Activated naive CD4-positive, alpha-beta T cell treated with anti-CD3 and anti-CD28 coated beads for 36 hours (primary cell): ENCODE measurements at regions of chr9 and their contacts with region 1.

Region 1: GRCh38 chr9:116589392-116590354 is 97.4 kb upstream of the TRIM32 start:
- DNase-seq: peak; percentile 43
- H3K4me3 Mint-ChIP-seq: no peak overlapping the region
- H3K27ac Mint-ChIP-seq: no peak overlapping the region
- H3K4me1 Mint-ChIP-seq: no peaks in the 10 kb centered on the region
- H3K27me3 Mint-ChIP-seq: no peaks in the 10 kb centered on the region

Region 2: GRCh38 chr9:116149844-116150243 is 439.8 kb before region 1 on chr9:
- CTCF ChIA-PET with region 1: no interaction called
- intact Hi-C with region 1: no loop called
- DNase-seq: no peak
- H3K4me3 Mint-ChIP-seq: no peak overlapping the region
- H3K27ac Mint-ChIP-seq: no peak overlapping the region
- H3K4me1 Mint-ChIP-seq: peaks cover 5% of the 10 kb centered on the region
- H3K27me3 Mint-ChIP-seq: peaks cover 50% of the 10 kb centered on the region

Region 3: DNA sequence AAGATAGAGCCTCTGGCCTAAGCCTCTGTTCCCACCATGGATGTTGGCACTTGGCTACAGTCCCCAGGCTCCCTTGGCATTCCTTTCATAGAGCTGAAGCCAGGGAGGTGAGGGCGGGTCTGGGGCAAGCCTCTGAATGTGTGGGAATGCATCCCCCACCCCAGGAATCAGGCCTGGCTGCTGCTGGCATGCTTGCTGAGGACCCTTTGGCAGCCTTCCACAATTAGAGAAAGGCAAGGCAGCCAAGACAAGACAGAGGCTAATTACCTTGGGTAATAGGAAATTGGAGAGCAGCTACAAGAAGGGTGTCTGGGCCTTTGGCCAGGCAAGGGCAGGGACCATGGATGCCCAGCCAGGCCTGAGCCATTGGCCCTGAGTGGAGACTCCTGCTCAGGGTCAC is 106.9 kb before region 1 on chr9:
- CTCF ChIA-PET with region 1: no interaction called
- intact Hi-C with region 1: no loop called
- DNase-seq: no peak
- H3K4me3 Mint-ChIP-seq: no peak overlapping the region
- H3K27ac Mint-ChIP-seq: no peak overlapping the region
- H3K4me1 Mint-ChIP-seq: no peaks in the 10 kb centered on the region
- H3K27me3 Mint-ChIP-seq: no peaks in the 10 kb centered on the region

Region 4: DNA sequence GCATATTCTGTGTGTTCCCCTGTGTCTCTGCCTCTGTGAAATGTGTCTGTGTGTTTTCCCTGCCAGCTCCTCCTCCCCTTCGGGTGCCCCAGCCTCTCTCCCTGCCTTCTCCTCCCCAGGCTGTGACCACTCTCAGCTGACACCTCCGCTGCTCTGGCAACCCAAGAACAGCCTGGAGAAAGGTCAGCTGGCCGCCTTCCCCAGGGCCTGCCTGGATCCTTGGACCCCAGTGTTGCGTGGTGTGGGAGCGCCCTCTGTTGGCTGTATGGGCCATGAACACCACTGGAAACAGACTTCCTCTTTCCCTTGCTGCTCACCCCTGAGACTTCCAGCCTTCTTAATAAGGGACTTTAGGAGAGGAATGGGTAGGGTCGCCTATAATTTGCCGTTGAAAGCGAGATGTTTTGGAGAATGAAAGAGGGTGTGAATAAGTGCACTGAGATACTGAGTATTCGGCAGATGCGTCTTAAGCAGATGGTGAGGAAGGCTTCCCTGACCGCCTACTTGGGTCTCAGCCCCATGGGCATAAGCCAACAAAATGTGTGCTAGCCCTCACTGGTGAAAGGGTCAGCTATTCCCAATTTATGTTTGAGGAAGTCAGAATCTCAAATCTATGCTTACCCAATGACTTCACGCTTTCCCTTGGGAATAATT is 17.5 kb before region 1 on chr9:
- CTCF ChIA-PET with region 1: no interaction called
- intact Hi-C with region 1: no loop called
- DNase-seq: peak; percentile 45
- H3K4me3 Mint-ChIP-seq: no peak overlapping the region
- H3K27ac Mint-ChIP-seq: no peak overlapping the region
- H3K4me1 Mint-ChIP-seq: no peaks in the 10 kb centered on the region
- H3K27me3 Mint-ChIP-seq: no peaks in the 10 kb centered on the region

Region 5: GRCh38 chr9:116616304-116616914 is 26.7 kb after region 1 on chr9:
- CTCF ChIA-PET with region 1: no interaction called
- intact Hi-C with region 1: no loop called
- DNase-seq: no peak
- H3K4me3 Mint-ChIP-seq: no peak overlapping the region
- H3K27ac Mint-ChIP-seq: no peak overlapping the region
- H3K4me1 Mint-ChIP-seq: no peaks in the 10 kb centered on the region
- H3K27me3 Mint-ChIP-seq: no peaks in the 10 kb centered on the region

Region 6: GRCh38 chr9:116646661-116647512 is 57.2 kb after region 1 on chr9:
- CTCF ChIA-PET with region 1: no interaction called
- intact Hi-C with region 1: loop called (anchors 1 kb)
- DNase-seq: no peak
- H3K4me3 Mint-ChIP-seq: no peak overlapping the region
- H3K27ac Mint-ChIP-seq: no peak overlapping the region
- H3K4me1 Mint-ChIP-seq: no peaks in the 10 kb centered on the region
- H3K27me3 Mint-ChIP-seq: no peaks in the 10 kb centered on the region

Region 7: GRCh38 chr9:116661037-116661954 is 71.6 kb after region 1 on chr9:
- CTCF ChIA-PET with region 1: interaction called, 3 read pairs
- intact Hi-C with region 1: loop called (anchors 1 kb)
- DNase-seq: peak; percentile 8
- H3K4me3 Mint-ChIP-seq: no peak overlapping the region
- H3K27ac Mint-ChIP-seq: no peak overlapping the region
- H3K4me1 Mint-ChIP-seq: no peaks in the 10 kb centered on the region
- H3K27me3 Mint-ChIP-seq: no peaks in the 10 kb centered on the region

Region 8: GRCh38 chr9:116860509-116861120 is 270.9 kb after region 1 on chr9:
- CTCF ChIA-PET with region 1: interaction called, 4 read pairs
- intact Hi-C with region 1: loop called (anchors 5 kb)
- DNase-seq: peak; percentile 37
- H3K4me3 Mint-ChIP-seq: no peak overlapping the region
- H3K27ac Mint-ChIP-seq: no peak overlapping the region
- H3K4me1 Mint-ChIP-seq: no peaks in the 10 kb centered on the region
- H3K27me3 Mint-ChIP-seq: peaks cover 7% of the 10 kb centered on the region